ENCODE measurements at regions of chr1 and their contacts with region 1.

Region 1: GRCh38 chr1:3012456-3013291 is 8.6 kb upstream of the ACTRT2 start:
- DNase-seq: peak; percentile 35 to 81 (median 42)
- ATAC-seq: peak in 3 of 4 donors; percentile 74 to 88 (median 79)
- H3K4me3 ChIP-seq: no peak overlapping the region
- H3K27ac ChIP-seq: no peak overlapping the region
- H3K4me1 ChIP-seq: peaks cover 0 to 7% (median 0%) of the 10 kb centered on the region in 12 donors
- H3K27me3 ChIP-seq: peaks cover 0 to 41% (median 6%) of the 10 kb centered on the region in 9 donors
- CTCF ChIP-seq: peak; percentile 74 to 96 (median 80)
- POLR2A ChIP-seq: no peak

Region 2: GRCh38 chr1:3060601-3061551 is 48.2 kb after region 1 on chr1:
- intact Hi-C with region 1: loop called in 1 of 10 experiments (anchors 2 kb)
- DNase-seq: peak in 1 of 5 donors; percentile 40
- ATAC-seq: no peak
- H3K4me3 ChIP-seq: no peak overlapping the region
- H3K27ac ChIP-seq: no peak overlapping the region
- H3K4me1 ChIP-seq: peaks cover 0 to 34% (median 8%) of the 10 kb centered on the region in 12 donors
- H3K27me3 ChIP-seq: peaks cover 7 to 42% (median 24%) of the 10 kb centered on the region in 9 donors
- CTCF ChIP-seq: no peak
- POLR2A ChIP-seq: no peak

Measured in heart left ventricle (tissue), 16 donors.